Colonic mucosa (tissue), 4 donors: ENCODE measurements at regions of chr2 and their contacts with region 1.

Region 1: DNA sequence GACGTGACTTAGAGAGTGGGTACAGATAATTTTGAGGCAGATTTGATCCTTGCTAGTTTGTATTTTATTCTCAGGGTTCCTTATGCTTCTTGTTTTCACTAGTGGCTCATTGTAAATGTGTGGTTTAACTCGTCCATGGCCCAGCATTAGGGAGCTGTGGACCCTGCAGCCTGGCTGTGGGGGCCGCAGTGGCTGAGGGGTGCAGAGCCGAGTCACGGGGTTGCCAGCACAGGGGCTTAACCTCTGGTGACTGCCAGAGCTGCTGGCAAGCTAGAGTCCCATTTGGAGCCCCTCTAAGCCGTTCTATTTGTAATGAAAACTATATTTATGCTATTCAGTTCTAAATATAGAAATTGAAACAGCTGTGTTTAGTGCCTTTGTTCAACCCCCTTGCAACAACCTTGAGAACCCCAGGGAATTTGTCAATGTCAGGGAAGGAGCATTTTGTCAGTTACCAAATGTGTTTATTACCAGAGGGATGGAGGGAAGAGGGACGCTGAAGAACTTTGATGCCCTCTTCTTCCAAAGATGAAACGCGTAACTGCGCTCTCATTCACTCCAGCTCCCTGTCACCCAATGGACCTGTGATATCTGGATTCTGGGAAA is 269.9 kb downstream of the MYT1L start:
- DNase-seq: no peak
- H3K4me3 ChIP-seq: no peak overlapping the region
- H3K27ac ChIP-seq: no peak overlapping the region
- H3K4me1 ChIP-seq: no peaks in the 10 kb centered on the region
- H3K27me3 ChIP-seq: no peaks in the 10 kb centered on the region
- CTCF ChIP-seq: no peak

Region 2: GRCh38 chr2:1936427-1936980 is 124.7 kb before region 1 on chr2:
- intact Hi-C with region 1: loop called (anchors 5 kb)
- DNase-seq: no peak
- H3K4me3 ChIP-seq: no peak overlapping the region
- H3K27ac ChIP-seq: no peak overlapping the region
- H3K4me1 ChIP-seq: no peaks in the 10 kb centered on the region
- H3K27me3 ChIP-seq: no peaks in the 10 kb centered on the region
- CTCF ChIP-seq: no peak

Region 3: GRCh38 chr2:2158189-2158826 is 97.1 kb after region 1 on chr2:
- intact Hi-C with region 1: no loop called
- DNase-seq: no peak
- H3K4me3 ChIP-seq: no peak overlapping the region
- H3K27ac ChIP-seq: no peak overlapping the region
- H3K4me1 ChIP-seq: no peaks in the 10 kb centered on the region
- H3K27me3 ChIP-seq: no peaks in the 10 kb centered on the region
- CTCF ChIP-seq: no peak